ENCODE measurements at regions of chr1 and their contacts with region 1.

Region 1: DNA sequence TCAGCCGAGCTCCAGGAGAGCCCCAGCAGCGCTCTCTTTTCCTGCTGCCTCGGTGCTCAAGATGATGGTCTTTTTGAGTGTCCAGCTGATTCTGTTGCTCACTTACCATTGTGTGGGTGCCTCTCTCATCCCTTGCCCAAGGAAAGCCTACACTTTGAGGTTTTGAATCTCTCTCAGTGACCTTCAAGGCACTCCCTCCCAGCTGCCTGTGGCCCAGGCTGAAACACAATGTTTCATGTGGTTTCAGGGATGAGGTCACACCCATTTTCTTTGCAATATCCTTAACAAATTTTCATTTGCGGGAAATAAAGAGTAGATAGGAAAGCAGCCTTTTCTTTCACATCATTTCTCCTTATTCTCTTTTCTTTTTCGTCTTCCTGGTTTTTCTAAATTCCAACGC is 12.6 kb upstream of the MRPS14 start:
- DNase-seq: no peak
- H3K4me3 ChIP-seq: no peak overlapping the region
- H3K27ac ChIP-seq: no peak overlapping the region
- H3K4me1 ChIP-seq: no peaks in the 10 kb centered on the region
- H3K27me3 ChIP-seq: no peaks in the 10 kb centered on the region
- CTCF ChIP-seq: no peak
- POLR2A ChIP-seq: no peak

Region 2: GRCh38 chr1:175146529-175147213 is 110.8 kb after region 1 on chr1:
- intact Hi-C with region 1: loop called (anchors 5 kb)
- DNase-seq: peak; percentile 16
- H3K4me3 ChIP-seq: no peak overlapping the region
- H3K27ac ChIP-seq: no peak overlapping the region
- H3K4me1 ChIP-seq: peaks cover 3% of the 10 kb centered on the region
- H3K27me3 ChIP-seq: no peaks in the 10 kb centered on the region
- CTCF ChIP-seq: peak; percentile 43 to 58 (median 52)
- POLR2A ChIP-seq: no peak